ENCODE measurements at regions of chr16 and their contacts with region 1.

Region 1: DNA sequence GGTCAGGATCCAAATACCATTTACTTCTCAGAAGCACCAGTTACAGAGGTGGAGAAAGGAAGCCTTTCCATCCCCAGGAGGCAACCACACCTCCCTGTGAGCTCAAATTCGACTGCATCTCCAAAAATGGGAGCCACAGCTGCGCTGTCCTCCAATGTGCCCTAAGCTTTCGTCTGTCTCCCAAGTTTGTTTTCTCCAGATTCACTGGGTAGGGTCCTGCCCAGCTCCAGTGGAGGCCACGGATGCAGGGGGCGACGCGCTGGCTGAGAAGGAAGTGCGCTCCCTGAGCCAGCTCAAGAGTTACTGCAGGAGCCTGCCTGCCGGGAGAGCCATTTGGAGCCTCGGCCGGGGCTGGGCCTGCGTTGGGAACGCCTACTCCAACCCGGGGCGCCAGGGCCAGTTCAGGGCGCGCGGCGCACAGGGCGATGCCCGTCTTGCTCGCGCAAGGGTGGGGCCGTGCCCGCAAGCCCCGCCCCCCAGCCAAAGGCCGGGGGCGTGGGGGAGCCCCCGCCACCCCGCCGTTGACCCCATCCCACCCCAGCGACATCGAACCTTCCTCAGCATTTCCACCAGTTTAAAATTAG is 19.5 kb downstream of the SIAH1 start:
- DNase-seq: peak; percentile 88
- ATAC-seq: peak; percentile 97
- H3K4me3 Mint-ChIP-seq: peak overlapping the region; percentile 98
- H3K27ac Mint-ChIP-seq: peak overlapping the region; percentile 99
- H3K4me1 Mint-ChIP-seq: peaks cover 52% of the 10 kb centered on the region
- H3K27me3 Mint-ChIP-seq: no peaks in the 10 kb centered on the region
- CTCF ChIP-seq: no peak

Region 2: DNA sequence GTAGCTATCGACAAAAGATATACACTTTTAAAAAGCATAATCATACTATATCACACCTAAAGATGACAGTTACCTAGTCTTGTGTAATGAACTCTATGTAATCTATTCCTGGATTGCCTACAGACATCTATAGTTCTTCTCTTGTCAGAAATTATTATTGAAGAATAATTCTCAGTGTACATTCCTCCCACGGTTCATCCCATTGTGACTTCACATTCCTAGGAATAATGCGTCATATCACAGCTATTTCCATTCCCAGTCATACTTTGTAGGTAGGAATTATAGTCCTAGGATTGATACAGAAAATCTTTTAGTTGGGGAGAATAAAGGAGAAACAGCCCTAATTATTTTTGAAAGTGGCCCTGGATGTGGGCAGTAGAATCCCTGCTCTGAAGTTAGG is 74.4 kb before region 1 on chr16:
- CTCF ChIA-PET with region 1: no interaction called
- POLR2A ChIA-PET with region 1: no interaction called
- intact Hi-C with region 1: no loop called
- DNase-seq: no peak
- ATAC-seq: no peak
- H3K4me3 Mint-ChIP-seq: no peak overlapping the region
- H3K27ac Mint-ChIP-seq: no peak overlapping the region
- H3K4me1 Mint-ChIP-seq: peaks cover 4% of the 10 kb centered on the region
- H3K27me3 Mint-ChIP-seq: no peaks in the 10 kb centered on the region
- CTCF ChIP-seq: no peak

Region 3: DNA sequence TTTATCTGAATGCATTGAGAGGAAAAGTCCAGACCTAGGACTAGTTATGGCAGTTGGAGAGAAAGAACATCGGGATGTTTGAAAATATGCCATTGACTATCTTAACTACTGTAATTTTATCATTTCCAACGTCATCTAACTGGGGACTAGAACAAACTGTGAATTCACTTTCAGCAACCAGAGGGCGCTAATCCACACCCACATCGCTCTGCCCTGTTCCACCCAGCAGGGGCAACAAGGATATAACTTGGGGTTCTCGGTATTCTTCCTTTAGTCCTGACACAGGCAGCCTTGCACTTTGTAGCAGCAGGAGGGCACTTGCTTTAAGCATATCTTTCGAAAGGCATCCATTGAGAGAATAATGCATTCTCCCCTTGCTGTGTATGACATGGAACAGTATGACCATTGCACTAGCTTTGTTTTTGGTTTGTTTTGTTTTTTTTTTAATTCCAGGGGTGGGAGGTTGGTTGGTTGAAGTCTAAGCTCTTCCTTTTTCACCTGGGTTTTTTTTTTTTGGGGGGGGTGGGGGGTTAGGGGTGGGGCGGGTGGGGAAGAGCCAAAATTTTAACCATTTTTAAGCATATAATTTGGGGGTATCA is 12.0 kb before region 1 on chr16:
- CTCF ChIA-PET with region 1: interaction called, 7 read pairs
- POLR2A ChIA-PET with region 1: interaction called, 28 read pairs
- intact Hi-C with region 1: no loop called
- DNase-seq: peak; percentile 76
- ATAC-seq: peak; percentile 81
- H3K4me3 Mint-ChIP-seq: peak overlapping the region; percentile 21
- H3K27ac Mint-ChIP-seq: peak overlapping the region; percentile 73
- H3K4me1 Mint-ChIP-seq: peaks cover 18% of the 10 kb centered on the region
- H3K27me3 Mint-ChIP-seq: no peaks in the 10 kb centered on the region
- CTCF ChIP-seq: peak; percentile 92

Region 4: DNA sequence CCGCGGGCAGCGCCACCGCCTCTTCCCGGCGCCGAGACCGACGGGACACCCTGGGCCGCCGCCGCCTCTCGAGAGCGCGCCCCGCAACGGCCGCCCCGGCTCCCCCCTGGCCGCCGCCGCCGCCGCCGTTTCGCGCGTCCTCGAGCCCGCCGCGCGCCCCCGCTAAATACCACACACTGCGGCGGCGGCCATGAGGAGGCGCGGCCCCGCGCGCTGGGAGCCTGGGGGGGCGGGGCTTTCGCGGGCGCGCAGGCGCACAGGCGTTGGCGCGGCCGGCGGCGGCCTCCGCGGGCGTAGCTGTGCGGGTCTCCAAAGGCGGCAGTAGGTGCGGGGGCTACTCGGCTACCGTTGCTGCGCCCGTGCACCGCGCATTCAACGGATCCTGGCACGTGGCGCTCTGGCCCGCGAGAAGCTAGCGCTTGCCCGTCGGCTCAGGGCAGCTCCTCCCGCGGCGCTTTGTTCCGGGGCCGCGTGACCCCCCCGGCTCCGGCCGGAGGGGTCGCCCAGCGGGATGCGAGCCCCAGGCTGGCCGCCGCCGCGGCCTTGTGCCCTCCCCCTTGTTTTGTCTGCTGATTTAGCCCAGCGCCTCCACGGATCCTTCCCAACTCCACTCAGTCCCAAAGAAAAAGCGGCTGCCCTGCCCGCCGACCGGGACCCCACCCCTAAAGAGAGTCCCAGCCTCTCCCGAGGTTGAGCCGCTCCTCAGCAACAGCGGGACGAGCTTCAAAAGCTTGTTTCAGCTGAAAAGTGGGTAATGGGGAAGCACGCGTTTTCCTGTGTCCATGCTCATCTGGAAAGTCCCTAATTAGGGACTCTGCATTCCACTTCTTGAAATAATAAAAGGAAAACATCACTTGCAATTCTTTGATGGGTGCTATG is 19.8 kb after region 1 on chr16 and contains the start of gene SIAH1:
- CTCF ChIA-PET with region 1: interaction called, 5 read pairs
- POLR2A ChIA-PET with region 1: interaction called, 14 read pairs
- intact Hi-C with region 1: loop called (anchors 2 kb)
- DNase-seq: peak; percentile 84
- ATAC-seq: peak; percentile 87
- H3K4me3 Mint-ChIP-seq: peak within 1 kb of the TSS; percentile 91
- H3K27ac Mint-ChIP-seq: peak within 1 kb of the TSS; percentile 91
- H3K4me1 Mint-ChIP-seq: peaks cover 18% of the 10 kb centered on the region
- H3K27me3 Mint-ChIP-seq: no peaks in the 10 kb centered on the region
- CTCF ChIP-seq: no peak
- total RNA-seq, gene SIAH1: 13.3 to 14.3 TPM

Measured in activated CD8-positive, alpha-beta T cell treated with anti-CD3 and anti-CD28 coated beads for 36 hours (primary cell).